AG04450 (cell line): ENCODE measurements at regions of chr6 and their contacts with region 1.

Region 1: GRCh38 chr6:83067448-83068413 is at the start of gene DOP1A:
- DNase-seq: peak; percentile 81
- H3K4me3 ChIP-seq: peak within 1 kb of the TSS; percentile 85
- H3K27ac ChIP-seq: no peak within 1 kb of the TSS
- H3K27me3 ChIP-seq: no peaks in the 10 kb centered on the region
- CTCF ChIP-seq: peak; percentile 99
- polyA plus RNA-seq, gene DOP1A: 11.3 and 14.6 TPM in 2 replicates

Region 2: GRCh38 chr6:82237013-82237412 is 830.7 kb before region 1 on chr6:
- CTCF ChIA-PET with region 1: interaction called, 10 read pairs
- POLR2A ChIA-PET with region 1: no interaction called
- DNase-seq: no peak
- H3K4me3 ChIP-seq: no peak overlapping the region
- H3K27ac ChIP-seq: no peak overlapping the region
- H3K27me3 ChIP-seq: no peaks in the 10 kb centered on the region
- CTCF ChIP-seq: no peak

Region 3: DNA sequence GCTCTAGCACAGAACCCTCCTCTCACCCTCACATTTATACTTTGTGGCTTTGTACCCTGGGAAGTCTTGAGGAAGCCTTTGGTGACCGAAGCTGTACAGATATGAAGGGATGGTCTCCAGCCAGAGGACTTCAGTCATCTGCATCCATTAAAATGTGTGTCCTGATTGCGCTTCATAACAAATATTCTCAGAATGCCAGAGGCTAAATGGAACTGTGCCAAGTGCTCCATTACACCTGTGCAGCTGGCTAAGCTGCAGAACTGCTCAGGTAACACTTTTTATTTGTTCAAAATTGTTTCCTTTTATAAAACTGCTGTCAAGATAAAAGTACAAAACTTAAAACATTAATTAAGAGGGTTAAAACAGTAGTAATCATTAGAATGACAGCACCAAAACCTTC is 681.8 kb before region 1 on chr6:
- CTCF ChIA-PET with region 1: interaction called, 15 read pairs
- POLR2A ChIA-PET with region 1: no interaction called
- DNase-seq: no peak
- H3K4me3 ChIP-seq: no peak overlapping the region
- H3K27ac ChIP-seq: no peak overlapping the region
- H3K27me3 ChIP-seq: no peaks in the 10 kb centered on the region
- CTCF ChIP-seq: no peak

Region 4: DNA sequence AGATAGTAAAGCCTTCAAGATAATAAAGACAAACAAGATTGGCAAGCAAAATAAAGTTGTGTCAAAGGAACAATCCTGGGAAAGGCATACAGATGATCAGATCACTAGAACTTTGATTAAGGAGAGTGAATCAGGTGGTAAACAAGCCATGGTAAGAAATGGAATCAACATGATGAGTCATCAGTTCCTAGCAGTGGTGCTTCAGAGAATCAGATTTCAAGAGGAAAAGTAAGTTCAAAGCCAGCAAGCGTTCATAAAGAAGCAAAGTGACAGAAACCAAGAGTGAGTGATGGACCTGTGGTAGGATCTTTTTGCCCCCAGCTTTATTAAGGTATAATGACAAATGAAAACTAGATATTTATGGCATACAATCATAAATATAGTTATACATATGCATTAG is 363.7 kb before region 1 on chr6:
- CTCF ChIA-PET with region 1: no interaction called
- POLR2A ChIA-PET with region 1: no interaction called
- DNase-seq: no peak
- H3K4me3 ChIP-seq: no peak overlapping the region
- H3K27ac ChIP-seq: no peak overlapping the region
- H3K27me3 ChIP-seq: no peaks in the 10 kb centered on the region
- CTCF ChIP-seq: no peak

Region 5: DNA sequence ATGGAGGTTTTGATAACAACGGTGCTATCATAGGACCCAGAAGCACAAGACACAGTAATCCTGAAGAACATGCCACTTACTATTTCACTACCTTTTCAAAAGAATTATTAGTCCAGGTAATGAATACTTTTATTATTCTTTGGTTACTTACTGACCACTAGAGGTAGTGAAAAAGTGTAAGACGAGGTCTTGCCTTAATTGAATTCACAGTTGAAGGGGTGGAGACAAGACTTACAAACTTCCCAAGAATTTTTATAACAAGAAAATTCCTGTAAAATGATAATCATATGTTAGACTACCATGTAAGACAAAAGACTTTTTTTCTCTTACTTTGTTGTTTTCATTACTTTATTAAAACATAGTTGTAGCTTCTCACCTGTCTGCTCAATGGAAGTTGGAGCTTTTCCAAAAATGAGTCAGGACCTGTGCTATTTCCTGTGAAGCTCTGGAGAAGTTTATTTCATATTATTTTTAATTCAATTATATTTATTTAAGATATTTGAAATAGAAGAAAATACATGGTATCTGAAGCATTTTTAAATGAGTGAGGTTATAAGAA is 52.1 kb after region 1 on chr6:
- CTCF ChIA-PET with region 1: interaction called, 16 read pairs
- POLR2A ChIA-PET with region 1: interaction called, 4 read pairs
- DNase-seq: no peak
- H3K4me3 ChIP-seq: no peak overlapping the region
- H3K27ac ChIP-seq: no peak overlapping the region
- H3K27me3 ChIP-seq: no peaks in the 10 kb centered on the region
- CTCF ChIP-seq: no peak

Region 6: GRCh38 chr6:83176246-83176645 is 108.5 kb after region 1 on chr6:
- CTCF ChIA-PET with region 1: interaction called, 52 read pairs
- POLR2A ChIA-PET with region 1: no interaction called
- DNase-seq: no peak
- H3K4me3 ChIP-seq: no peak overlapping the region
- H3K27ac ChIP-seq: no peak overlapping the region
- H3K27me3 ChIP-seq: no peaks in the 10 kb centered on the region
- CTCF ChIP-seq: no peak

Region 7: DNA sequence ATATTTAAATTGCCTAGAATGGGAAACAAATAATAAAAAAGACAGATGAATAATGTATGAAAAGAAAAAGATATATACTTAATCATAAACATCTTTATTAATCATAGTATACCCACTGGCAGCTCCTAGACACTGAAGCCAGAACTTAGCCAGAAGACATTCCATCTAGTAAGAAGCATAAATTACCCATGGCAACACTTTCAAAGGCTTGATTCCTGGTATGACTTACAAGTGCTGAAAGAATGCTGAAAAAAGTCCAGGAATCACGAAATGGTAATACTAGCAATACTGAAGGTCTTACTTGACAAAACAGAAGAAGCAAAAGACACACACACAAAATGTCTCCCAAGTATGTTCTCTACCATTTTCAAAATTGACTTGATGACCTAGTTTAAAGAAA is 163.4 kb after region 1 on chr6:
- CTCF ChIA-PET with region 1: interaction called, 19 read pairs
- POLR2A ChIA-PET with region 1: no interaction called
- DNase-seq: peak; percentile 62
- H3K4me3 ChIP-seq: no peak overlapping the region
- H3K27ac ChIP-seq: no peak overlapping the region
- H3K27me3 ChIP-seq: no peaks in the 10 kb centered on the region
- CTCF ChIP-seq: no peak

Region 8: DNA sequence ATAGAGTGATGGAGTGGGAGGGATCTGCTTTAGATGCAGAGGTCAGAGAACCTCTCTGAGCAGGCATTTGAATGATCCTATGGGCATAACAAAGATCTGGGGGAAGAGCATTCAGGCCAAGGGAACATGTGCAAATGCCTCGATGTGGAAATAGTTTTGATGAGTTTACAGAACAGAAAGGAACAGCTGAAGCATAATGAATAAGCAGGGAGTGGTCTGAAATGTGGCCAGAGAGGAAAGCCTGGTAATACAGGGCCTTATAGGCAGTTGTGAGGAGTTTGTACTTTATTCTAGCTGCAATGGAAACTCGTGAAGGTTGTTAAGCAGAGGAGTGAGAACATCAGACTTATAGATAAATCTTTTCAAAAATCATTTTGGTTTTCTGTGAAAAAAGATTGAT is 396.2 kb after region 1 on chr6:
- CTCF ChIA-PET with region 1: interaction called, 12 read pairs
- POLR2A ChIA-PET with region 1: no interaction called
- DNase-seq: no peak
- H3K4me3 ChIP-seq: no peak overlapping the region
- H3K27ac ChIP-seq: no peak overlapping the region
- H3K27me3 ChIP-seq: no peaks in the 10 kb centered on the region
- CTCF ChIP-seq: no peak